ENCODE measurements at regions of chr2 and their contacts with region 1.

Region 1: DNA sequence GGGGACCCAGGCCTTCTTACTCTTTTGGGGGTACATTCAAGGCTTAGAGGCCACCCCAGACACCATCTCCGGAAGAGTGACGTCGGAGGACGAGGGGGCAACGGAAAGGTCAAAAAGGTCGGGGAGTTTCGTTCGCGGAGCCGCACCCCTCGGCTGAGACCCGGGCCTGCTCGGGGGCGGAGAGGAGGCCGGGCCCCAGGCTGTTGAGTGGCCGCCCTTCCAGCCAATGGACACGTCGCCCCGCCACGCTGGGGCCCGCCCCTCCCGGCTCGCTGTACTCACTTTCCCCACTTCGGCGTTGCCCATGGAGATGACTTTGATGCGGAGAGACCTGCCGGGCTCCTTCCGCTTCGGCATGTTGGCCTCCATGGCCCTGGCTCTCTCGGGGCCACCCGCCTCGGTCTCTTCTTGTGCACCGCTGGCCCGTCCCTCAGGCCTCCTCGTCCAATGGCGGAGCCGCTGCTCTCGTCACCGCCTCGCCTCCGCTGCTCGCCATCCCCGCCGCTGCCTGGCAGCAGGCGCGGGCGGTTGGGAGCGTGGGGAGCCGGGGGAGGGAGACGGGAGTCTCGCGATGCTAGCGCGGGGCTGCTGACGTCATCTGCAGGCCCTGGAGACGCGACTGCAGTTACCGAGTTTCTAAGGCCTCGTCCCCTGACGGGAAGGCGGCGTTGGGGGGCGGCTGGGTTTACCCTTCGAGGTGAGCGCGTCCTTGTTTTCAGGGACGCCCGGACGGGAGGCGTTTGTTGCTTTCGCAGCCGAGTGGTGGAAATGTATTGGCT is at the start of gene DNAJC27:
- DNase-seq: peak; percentile 97 to 99 (median 99)
- ATAC-seq: peak; percentile 93
- H3K4me3 ChIP-seq: peak within 1 kb of the TSS; percentile 90
- H3K4me3 Mint-ChIP-seq: peak within 1 kb of the TSS; percentile 96 to 99 (median 98)
- H3K27ac ChIP-seq: peak within 1 kb of the TSS; percentile 98
- H3K27ac Mint-ChIP-seq: peak within 1 kb of the TSS; percentile 99 to 100 (median 100)
- H3K4me1 ChIP-seq: peaks cover 0 to 17% of the 10 kb centered on the region in 2 donors
- H3K4me1 Mint-ChIP-seq: peaks cover 6 to 46% (median 30%) of the 10 kb centered on the region in 7 donors
- H3K27me3 ChIP-seq: no peaks in the 10 kb centered on the region
- H3K27me3 Mint-ChIP-seq: no peaks in the 10 kb centered on the region
- total RNA-seq, gene DNAJC27: 5.9 to 22.0 (median 18.1) TPM

Region 2: GRCh38 chr2:24360050-24360962 is 611.4 kb before region 1 on chr2 and contains the start of gene ITSN2:
- CTCF ChIA-PET with region 1: no interaction called
- POLR2A ChIA-PET with region 1: no interaction called
- intact Hi-C with region 1: loop called (anchors 2 to 5 kb)
- DNase-seq: peak; percentile 76 to 88 (median 83)
- ATAC-seq: peak; percentile 92
- H3K4me3 ChIP-seq: peak within 1 kb of the TSS; percentile 77
- H3K4me3 Mint-ChIP-seq: peak within 1 kb of the TSS; percentile 88 to 98 (median 92)
- H3K27ac ChIP-seq: peak within 1 kb of the TSS; percentile 99
- H3K27ac Mint-ChIP-seq: peak within 1 kb of the TSS; percentile 91 to 97 (median 95)
- H3K4me1 ChIP-seq: peaks cover 1 to 16% of the 10 kb centered on the region in 2 donors
- H3K4me1 Mint-ChIP-seq: peaks cover 22 to 44% (median 31%) of the 10 kb centered on the region in 7 donors
- H3K27me3 ChIP-seq: no peaks in the 10 kb centered on the region
- H3K27me3 Mint-ChIP-seq: peaks cover 0 to 3% (median 0%) of the 10 kb centered on the region in 5 donors
- total RNA-seq, gene ITSN2: 79.2 to 133 (median 106) TPM

Region 3: DNA sequence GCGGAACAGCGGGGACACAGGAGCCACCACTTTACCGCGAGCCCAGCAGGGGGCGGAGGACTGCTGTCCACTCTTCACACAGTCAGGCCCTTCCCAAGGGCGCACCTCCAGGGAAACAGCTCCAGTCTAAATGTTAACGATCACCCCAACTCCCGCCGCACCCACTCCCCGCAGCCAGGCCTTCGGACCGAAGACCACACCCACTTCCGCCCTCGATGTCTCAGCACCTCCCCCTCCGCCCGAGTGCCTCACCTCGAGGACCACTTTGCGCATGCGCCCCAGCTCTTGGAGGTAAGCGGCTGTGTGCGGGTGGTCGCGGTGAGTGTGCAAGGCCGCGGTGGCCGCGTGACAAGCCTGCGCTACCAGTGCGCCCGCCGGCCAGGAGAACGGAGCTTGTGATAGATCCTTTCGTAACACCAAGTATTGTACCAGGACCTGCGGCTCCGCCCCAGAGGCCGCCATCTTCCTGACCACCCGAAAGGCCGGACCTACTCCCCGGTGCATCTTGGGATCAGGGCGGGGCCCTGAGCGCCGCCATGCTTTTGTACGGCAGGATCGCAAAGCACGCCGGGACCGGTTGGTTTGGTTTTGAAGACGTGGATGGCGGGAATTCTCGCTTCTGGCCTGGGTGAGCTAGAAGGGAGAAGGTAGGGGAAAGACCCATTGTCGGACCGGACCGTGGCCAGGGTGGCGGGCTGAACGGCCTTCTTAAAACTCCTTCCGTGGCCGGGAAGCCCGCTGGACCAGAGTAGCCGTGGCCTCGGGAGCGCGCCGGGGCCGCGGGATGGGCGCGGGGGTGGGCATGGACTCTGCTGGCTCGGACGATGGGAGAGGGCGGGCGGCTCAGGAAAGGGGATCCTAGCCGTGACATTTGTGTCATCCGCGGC is 178.6 kb before region 1 on chr2 and contains the starts of genes CENPO and PTRHD1:
- CTCF ChIA-PET with region 1: no interaction called
- POLR2A ChIA-PET with region 1: interaction called, 3 read pairs
- intact Hi-C with region 1: loop called (anchors 1 kb)
- DNase-seq: peak; percentile 93 to 99 (median 97)
- ATAC-seq: peak; percentile 98
- H3K4me3 ChIP-seq: peak within 1 kb of the TSS; percentile 97
- H3K4me3 Mint-ChIP-seq: peak within 1 kb of the TSS; percentile 95 to 100 (median 98)
- H3K27ac ChIP-seq: peak within 1 kb of the TSS; percentile 96
- H3K27ac Mint-ChIP-seq: peak within 1 kb of the TSS; percentile 99 to 100 (median 99)
- H3K4me1 ChIP-seq: peaks cover 6 to 10% of the 10 kb centered on the region in 2 donors
- H3K4me1 Mint-ChIP-seq: peaks cover 5 to 53% (median 20%) of the 10 kb centered on the region in 7 donors
- H3K27me3 ChIP-seq: no peaks in the 10 kb centered on the region
- H3K27me3 Mint-ChIP-seq: no peaks in the 10 kb centered on the region
- total RNA-seq, gene CENPO: 3.6 to 36.6 (median 6.0) TPM
- total RNA-seq, gene PTRHD1: 14.3 to 31.5 (median 17.1) TPM

Region 4: DNA sequence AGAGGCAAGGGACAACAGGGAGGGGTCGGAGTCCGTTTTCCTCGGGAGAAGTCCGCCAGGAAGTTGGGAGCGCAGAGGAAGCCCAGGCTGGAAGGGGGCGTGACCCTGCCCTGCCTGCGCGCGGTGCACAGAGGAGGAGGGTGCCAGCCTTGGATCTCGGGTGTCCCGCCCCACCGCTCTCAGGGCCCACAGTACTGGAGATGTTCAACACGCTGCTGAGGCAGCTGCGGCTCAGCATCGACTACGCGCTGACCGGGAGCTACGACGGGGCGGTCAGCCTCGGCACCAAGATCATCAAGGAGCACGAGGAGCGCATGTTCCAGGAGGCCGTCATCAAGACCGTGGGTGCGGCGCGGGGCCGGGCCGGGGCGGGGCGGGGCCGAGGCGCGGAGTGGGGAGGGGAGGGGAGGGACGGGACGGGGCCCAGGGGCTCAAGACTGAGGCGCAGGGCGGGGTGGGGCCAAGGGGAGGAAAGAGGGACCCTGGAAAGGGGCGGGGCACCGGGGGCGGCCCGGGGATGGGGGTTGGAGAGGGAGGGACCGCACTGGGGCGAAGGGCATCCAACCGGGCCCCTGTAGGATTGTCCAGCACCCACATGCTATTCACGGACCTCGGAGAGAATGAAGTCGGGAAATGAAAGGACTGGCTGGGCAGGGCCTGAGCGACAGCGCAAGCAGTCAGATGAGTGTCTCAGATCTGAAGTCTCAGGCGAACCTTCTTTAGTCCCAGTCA is 160.0 kb after region 1 on chr2:
- CTCF ChIA-PET with region 1: interaction called, 34 read pairs
- POLR2A ChIA-PET with region 1: interaction called, 4 read pairs
- intact Hi-C with region 1: loop called in 1 of 2 experiments (anchors 1 kb)
- DNase-seq: peak in 1 of 9 donors; percentile 32
- ATAC-seq: peak; percentile 44
- H3K4me3 ChIP-seq: no peak overlapping the region
- H3K4me3 Mint-ChIP-seq: peak overlapping the region; percentile 20 to 82 (median 74)
- H3K27ac ChIP-seq: no peak overlapping the region
- H3K27ac Mint-ChIP-seq: peak overlapping the region in 1 of 9 donors; percentile 62
- H3K4me1 ChIP-seq: peaks cover 0 to 6% of the 10 kb centered on the region in 2 donors
- H3K4me1 Mint-ChIP-seq: peaks cover 6 to 16% (median 12%) of the 10 kb centered on the region in 7 donors
- H3K27me3 ChIP-seq: peaks cover 0 to 17% of the 10 kb centered on the region in 2 donors
- H3K27me3 Mint-ChIP-seq: peaks cover 52 to 65% (median 58%) of the 10 kb centered on the region in 5 donors

Region 5: DNA sequence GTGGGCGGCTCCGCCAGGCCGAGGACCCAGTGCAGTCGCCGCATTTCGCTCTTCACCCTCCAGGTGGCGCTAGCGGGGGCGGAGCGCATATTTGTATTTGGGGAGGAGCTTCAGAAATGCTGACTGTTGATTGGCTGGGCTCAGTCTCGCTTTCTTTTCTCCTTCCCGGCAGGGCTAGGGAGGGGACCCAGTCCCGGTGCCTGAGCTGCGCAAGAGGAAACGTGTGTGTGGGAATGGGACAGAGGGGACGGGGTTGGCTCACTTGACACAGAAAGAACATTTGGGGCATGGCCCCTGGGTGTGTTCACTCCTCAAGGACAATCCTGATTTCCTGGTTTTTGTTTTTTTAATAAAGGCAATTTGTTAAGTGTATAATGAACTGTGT is 390.3 kb after region 1 on chr2:
- CTCF ChIA-PET with region 1: no interaction called
- POLR2A ChIA-PET with region 1: no interaction called
- intact Hi-C with region 1: loop called in 1 of 2 experiments (anchors 1 kb)
- DNase-seq: peak; percentile 86 to 99 (median 93)
- ATAC-seq: peak; percentile 98
- H3K4me3 ChIP-seq: peak overlapping the region; percentile 78
- H3K4me3 Mint-ChIP-seq: peak overlapping the region; percentile 83 to 95 (median 89)
- H3K27ac ChIP-seq: peak overlapping the region; percentile 81
- H3K27ac Mint-ChIP-seq: peak overlapping the region; percentile 84 to 96 (median 92)
- H3K4me1 ChIP-seq: peaks cover 3 to 4% of the 10 kb centered on the region in 2 donors
- H3K4me1 Mint-ChIP-seq: peaks cover 11 to 32% (median 25%) of the 10 kb centered on the region in 7 donors
- H3K27me3 ChIP-seq: no peaks in the 10 kb centered on the region
- H3K27me3 Mint-ChIP-seq: no peaks in the 10 kb centered on the region

Region 6: GRCh38 chr2:25673300-25674076 is 701.8 kb after region 1 on chr2 and contains the start of gene DTNB:
- CTCF ChIA-PET with region 1: no interaction called
- POLR2A ChIA-PET with region 1: no interaction called
- intact Hi-C with region 1: loop called in 1 of 2 experiments (anchors 2 kb)
- DNase-seq: peak; percentile 68 to 82 (median 79)
- ATAC-seq: peak; percentile 89
- H3K4me3 ChIP-seq: peak within 1 kb of the TSS; percentile 94
- H3K4me3 Mint-ChIP-seq: peak within 1 kb of the TSS; percentile 84 to 90 (median 88)
- H3K27ac ChIP-seq: peak within 1 kb of the TSS; percentile 80
- H3K27ac Mint-ChIP-seq: peak within 1 kb of the TSS; percentile 74 to 92 (median 84)
- H3K4me1 ChIP-seq: peaks cover 12 to 15% of the 10 kb centered on the region in 2 donors
- H3K4me1 Mint-ChIP-seq: peaks cover 15 to 56% (median 37%) of the 10 kb centered on the region in 7 donors
- H3K27me3 ChIP-seq: no peaks in the 10 kb centered on the region
- H3K27me3 Mint-ChIP-seq: peaks cover 0 to 25% (median 0%) of the 10 kb centered on the region in 5 donors
- total RNA-seq, gene DTNB: 32.8 to 56.2 (median 33.8) TPM